Activated CD4-positive, alpha-beta T cell treated with anti-CD3 and anti-CD28 coated beads, Interleukin-2, amount 10 ng/mL, durations not matched to agents 24 days and 14 days (primary cell): ENCODE measurements at regions of chr1 and their contacts with region 1.

Region 1: DNA sequence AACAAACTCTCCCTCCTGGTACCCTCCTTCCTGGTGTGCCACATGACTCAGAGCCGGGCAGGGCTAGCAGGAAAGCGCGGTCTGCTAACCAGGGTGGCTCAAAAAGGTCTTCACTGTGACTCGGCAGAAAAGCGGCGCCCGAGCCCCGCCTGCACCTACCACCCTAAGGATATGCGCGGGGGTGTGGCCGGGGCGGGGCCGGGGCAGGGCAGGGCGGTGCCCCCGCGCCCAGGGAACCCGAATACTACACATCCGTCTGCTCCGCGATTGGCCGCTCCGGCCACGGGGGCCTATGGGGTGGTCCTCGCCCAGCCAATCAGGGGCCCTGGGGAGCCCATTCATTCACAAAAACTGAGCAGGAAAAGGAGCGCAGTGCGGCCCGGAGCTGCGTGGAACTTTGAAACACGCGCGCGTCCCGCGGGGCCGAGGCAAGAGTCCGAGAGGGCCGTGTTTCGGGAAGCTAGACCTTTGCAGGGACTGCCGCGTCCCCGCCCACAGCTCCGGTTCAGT is 1.7 kb downstream of the LRP8 start:
- DNase-seq: peak; percentile 98
- H3K4me3 Mint-ChIP-seq: peak overlapping the region; percentile 99
- H3K27ac Mint-ChIP-seq: peak overlapping the region; percentile 97
- H3K4me1 Mint-ChIP-seq: peaks cover 40% of the 10 kb centered on the region
- H3K27me3 Mint-ChIP-seq: no peaks in the 10 kb centered on the region

Region 2: DNA sequence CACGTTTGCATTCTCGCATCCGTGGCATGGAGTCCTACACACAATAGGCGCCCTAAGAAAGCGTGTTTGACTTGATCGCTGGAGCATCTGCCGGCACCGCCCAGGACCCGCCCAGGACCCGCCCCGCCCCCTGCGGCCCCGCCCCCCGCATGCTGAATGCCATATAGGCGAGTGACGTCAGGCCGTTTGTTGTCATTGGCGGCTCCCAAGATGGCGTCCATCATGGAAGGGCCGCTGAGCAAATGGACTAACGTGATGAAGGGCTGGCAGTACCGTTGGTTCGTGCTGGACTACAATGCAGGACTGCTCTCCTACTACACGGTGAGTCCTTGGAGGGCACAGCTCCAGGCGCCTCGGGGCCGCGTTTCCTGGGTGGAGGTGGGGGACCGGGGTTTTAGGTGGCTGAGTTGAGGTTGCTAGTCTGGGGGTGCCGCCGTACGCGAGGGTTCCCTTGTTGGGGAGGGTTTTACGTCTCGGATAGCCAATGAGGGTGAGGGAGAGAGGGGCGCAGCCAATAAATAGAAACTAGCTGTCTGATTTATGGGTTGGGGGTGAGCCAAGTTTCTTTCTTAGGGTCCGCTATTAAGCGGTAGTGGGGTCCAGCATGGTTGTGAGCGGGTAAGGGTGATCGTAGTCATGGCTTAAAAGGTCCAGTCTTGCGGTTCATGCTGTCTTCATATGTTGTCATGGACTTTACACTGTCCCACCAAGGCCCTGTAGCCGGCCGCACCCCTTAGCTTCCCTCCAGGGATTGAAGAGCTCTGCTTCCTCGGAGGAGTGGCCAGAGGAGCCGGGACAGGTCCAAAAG is 1709.0 kb before region 1 on chr1 and contains the start of gene OSBPL9:
- intact Hi-C with region 1: loop called (anchors 5 kb)
- DNase-seq: peak; percentile 95
- H3K4me3 Mint-ChIP-seq: peak within 1 kb of the TSS; percentile 99
- H3K27ac Mint-ChIP-seq: peak within 1 kb of the TSS; percentile 97
- H3K4me1 Mint-ChIP-seq: peaks cover 23% of the 10 kb centered on the region
- H3K27me3 Mint-ChIP-seq: peaks cover 6% of the 10 kb centered on the region
- total RNA-seq, gene OSBPL9: 47.4 and 47.9 TPM in 2 replicates

Region 3: GRCh38 chr1:52867087-52867863 is 458.9 kb before region 1 on chr1:
- intact Hi-C with region 1: no loop called
- DNase-seq: no peak
- H3K4me3 Mint-ChIP-seq: no peak overlapping the region
- H3K27ac Mint-ChIP-seq: no peak overlapping the region
- H3K4me1 Mint-ChIP-seq: no peaks in the 10 kb centered on the region
- H3K27me3 Mint-ChIP-seq: peaks cover 3% of the 10 kb centered on the region

Region 4: DNA sequence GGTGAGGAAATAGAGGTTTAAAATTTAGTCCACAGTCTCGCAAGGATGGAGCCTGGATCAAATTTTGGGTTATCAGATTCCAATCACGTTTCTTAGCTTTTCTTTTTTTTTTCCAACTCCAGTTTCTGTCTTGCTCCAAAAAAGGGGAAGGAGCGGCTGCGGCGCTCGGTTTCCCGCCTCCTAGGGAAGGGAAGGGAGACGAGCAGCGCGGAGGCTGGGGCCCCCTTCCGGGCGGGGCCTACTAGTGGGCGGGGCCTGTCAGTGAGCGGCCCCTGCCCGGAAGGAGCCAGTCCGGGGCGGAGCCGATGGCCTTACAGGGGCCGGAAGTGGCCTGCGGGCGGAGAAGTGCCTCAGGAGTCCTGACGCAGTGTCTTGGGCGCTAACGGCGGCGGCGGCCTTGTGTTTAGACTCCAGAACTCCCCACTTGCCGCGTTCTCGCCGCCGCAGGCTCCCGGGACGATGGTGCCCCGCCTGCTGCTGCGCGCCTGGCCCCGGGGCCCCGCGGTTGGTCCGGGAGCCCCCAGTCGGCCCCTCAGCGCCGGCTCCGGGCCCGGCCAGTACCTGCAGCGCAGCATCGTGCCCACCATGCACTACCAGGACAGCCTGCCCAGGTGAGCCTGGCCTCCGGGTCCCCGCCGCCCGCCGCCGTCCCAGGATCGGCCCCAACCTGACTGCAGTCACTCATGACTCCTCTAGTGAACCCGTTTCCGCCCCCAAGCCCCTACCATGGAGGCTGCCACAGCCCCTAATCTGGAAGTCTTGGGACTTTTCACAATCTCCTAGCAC is 129.5 kb before region 1 on chr1 and contains the start of gene CPT2:
- intact Hi-C with region 1: loop called (anchors 2 kb)
- DNase-seq: peak; percentile 98
- H3K4me3 Mint-ChIP-seq: peak within 1 kb of the TSS; percentile 88
- H3K27ac Mint-ChIP-seq: peak within 1 kb of the TSS; percentile 96
- H3K4me1 Mint-ChIP-seq: peaks cover 24% of the 10 kb centered on the region
- H3K27me3 Mint-ChIP-seq: no peaks in the 10 kb centered on the region
- total RNA-seq, gene CPT2: 19.5 and 19.9 TPM in 2 replicates

Region 5: DNA sequence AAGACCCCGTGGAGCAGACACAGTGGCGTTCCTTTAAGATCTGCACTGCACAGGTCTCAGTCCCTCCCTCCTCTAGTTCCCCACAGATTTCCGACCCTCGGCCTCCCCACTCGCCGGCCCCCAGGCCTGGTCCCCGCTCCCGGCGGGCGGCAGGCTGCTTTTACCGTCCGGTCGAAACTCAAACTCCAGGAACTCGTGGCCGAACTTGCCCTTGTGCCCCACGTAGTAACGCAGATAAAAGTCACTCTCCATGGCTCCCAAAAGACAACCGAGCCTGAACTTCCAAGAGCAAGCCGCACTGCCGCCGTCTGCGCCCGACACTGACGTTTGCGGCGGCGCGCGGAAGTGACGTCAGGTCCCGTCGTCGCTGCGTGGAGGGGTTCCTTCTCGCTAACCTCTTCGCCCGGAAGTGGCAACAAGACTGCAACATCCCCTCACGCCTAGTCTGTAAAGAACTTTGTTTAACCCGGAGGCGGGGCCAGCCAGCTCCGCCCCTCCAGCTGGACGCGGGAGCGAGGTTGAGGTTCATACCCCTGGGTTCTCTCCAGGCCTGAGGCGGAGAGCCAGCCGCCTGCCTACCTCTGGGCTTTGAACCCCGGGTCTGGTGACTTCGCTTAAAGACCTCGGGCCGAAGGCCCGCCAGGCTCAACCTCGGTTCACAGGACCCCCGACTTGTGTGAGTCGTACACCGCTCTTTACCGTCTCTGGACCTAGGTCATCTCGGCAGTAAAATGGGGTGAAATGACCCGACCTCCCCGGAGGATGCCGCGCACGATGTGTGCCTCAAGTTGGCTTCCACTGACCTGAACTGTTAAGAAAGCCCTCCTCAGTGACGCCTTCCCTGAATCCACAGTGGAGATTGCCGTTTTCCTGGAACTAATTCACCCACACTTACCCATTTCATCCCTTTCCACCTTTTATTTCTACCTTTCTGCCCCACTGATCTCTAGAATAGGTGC is 87.7 kb before region 1 on chr1 and contains the start of gene MAGOH:
- intact Hi-C with region 1: loop called (anchors 1 kb)
- DNase-seq: peak; percentile 99
- H3K4me3 Mint-ChIP-seq: peak within 1 kb of the TSS; percentile 95
- H3K27ac Mint-ChIP-seq: peak within 1 kb of the TSS; percentile 92
- H3K4me1 Mint-ChIP-seq: peaks cover 24% of the 10 kb centered on the region
- H3K27me3 Mint-ChIP-seq: no peaks in the 10 kb centered on the region
- total RNA-seq, gene MAGOH: 96.4 and 107 TPM in 2 replicates

Region 6: GRCh38 chr1:53381790-53382401 is 55.8 kb after region 1 on chr1:
- intact Hi-C with region 1: no loop called
- DNase-seq: no peak
- H3K4me3 Mint-ChIP-seq: no peak overlapping the region
- H3K27ac Mint-ChIP-seq: no peak overlapping the region
- H3K4me1 Mint-ChIP-seq: peaks cover 3% of the 10 kb centered on the region
- H3K27me3 Mint-ChIP-seq: peaks cover 33% of the 10 kb centered on the region

Region 7: DNA sequence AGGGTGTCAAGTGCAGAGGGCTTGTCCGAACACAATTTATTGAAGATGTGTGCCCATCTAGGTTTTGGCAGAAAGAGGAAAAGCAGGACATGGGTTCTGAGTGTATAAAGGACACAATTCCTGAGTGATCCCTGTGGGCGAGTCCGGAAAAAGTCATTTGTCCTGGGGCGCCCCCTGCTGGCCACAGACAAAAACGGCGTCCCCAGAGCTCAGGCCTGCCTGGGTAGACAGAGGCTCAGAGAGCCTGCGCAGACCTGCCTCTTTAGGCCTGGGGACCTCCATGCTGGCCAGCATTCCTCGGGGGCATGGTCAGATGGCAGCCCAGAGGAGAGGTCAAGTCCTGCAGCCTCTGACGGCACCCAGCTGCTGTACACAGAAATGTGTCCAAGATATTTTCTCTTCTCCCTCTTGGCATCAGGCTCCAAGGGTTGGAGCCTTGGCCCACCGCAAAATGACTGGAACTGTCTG is 67.2 kb after region 1 on chr1:
- intact Hi-C with region 1: loop called (anchors 2 kb)
- DNase-seq: peak; percentile 92
- H3K4me3 Mint-ChIP-seq: no peak overlapping the region
- H3K27ac Mint-ChIP-seq: no peak overlapping the region
- H3K4me1 Mint-ChIP-seq: peaks cover 10% of the 10 kb centered on the region
- H3K27me3 Mint-ChIP-seq: peaks cover 16% of the 10 kb centered on the region

Region 8: DNA sequence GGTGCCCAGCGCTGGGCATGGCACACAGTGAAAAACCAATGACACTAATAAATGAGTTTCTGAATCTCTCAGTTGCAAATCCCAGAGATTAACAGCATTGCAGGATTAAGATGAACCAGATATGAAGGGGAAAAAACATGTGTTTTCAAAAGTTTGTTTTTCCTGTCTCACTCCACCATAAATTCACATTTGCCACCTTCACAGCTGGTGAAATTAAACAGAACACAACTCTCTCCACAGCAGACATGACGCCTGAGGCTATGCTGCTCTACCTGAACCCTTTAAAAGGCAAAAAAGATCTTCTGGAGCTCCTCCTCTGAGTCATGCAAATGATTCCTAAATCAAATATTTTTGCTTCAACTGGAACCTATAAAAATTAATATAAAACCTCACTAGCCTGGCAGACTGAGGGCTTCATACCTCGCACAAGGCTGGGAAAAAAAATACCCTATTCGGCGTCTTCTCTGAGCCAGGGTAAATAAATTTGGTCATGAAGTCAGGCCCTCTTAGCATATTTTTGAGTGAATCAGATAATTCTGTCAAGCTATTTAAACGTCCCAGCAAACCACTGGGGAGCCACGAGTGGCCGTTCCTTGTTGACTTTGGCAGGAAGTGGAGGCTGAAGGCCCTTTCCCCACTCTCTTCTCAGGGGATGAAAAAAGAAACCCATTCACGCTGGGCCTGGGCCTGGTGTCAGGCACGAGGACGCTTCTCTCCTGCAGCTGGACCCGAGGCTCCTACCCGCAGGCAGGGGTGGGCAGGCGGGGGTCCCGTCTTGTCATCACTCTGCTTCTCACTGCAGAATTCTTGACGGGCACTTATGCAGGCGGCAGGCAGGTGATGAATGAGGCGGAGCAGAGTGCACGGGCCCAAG is 186.0 kb after region 1 on chr1:
- intact Hi-C with region 1: no loop called
- DNase-seq: no peak
- H3K4me3 Mint-ChIP-seq: no peak overlapping the region
- H3K27ac Mint-ChIP-seq: no peak overlapping the region
- H3K4me1 Mint-ChIP-seq: no peaks in the 10 kb centered on the region
- H3K27me3 Mint-ChIP-seq: no peaks in the 10 kb centered on the region

Region 9: GRCh38 chr1:53826367-53826766 is 500.2 kb after region 1 on chr1:
- intact Hi-C with region 1: no loop called
- DNase-seq: no peak
- H3K4me3 Mint-ChIP-seq: no peak overlapping the region
- H3K27ac Mint-ChIP-seq: no peak overlapping the region
- H3K4me1 Mint-ChIP-seq: no peaks in the 10 kb centered on the region
- H3K27me3 Mint-ChIP-seq: no peaks in the 10 kb centered on the region

Region 10: DNA sequence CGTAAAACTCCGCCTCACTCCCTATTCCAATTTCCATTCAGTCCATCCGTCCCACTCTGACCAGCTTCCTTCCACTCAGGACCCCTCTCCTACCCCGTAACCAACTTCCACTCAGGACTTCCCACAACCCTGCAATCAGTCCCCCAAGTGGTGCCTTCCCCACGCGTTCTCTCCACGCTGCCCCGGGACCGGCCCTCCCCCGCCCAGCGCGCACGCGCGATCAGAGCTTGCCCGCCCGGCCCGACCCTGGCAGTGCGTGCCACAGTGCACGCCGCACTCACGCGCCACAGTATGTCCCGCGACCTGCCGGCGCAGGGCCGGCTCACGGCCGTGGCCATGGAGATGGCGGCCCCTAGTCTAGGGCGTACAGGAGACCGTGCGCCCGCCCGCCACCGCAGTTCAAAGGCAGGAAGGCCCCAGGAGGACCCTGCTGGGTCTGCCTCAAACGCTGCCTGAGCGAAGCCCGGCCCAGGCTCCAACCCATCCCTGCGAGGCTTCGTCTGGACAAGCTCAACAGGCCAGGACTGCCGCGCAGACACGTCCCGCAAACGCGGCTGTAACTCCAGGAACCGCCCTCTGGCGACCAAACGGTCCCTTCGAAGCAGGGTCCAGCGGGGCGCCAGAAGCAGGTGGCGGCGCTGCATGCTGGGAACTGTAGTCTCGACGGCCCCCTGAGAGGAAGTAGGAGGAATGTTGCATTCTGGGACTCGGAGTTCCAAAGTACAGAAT is 511.9 kb after region 1 on chr1 and contains the start of gene NDC1:
- intact Hi-C with region 1: loop called (anchors 2 kb)
- DNase-seq: peak; percentile 96
- H3K4me3 Mint-ChIP-seq: peak within 1 kb of the TSS; percentile 100
- H3K27ac Mint-ChIP-seq: peak within 1 kb of the TSS; percentile 100
- H3K4me1 Mint-ChIP-seq: peaks cover 25% of the 10 kb centered on the region
- H3K27me3 Mint-ChIP-seq: no peaks in the 10 kb centered on the region
- total RNA-seq, gene NDC1: 39.7 and 40.8 TPM in 2 replicates